ENCODE measurements at regions of chr19 and their contacts with region 1.

Region 1: GRCh38 chr19:53879140-53880081 is 2.6 kb upstream of the PRKCG start:
- DNase-seq: peak; percentile 85
- H3K4me3 Mint-ChIP-seq: no peak overlapping the region
- H3K27ac Mint-ChIP-seq: peak overlapping the region; percentile 14
- H3K4me1 Mint-ChIP-seq: peaks cover 47% of the 10 kb centered on the region
- H3K27me3 Mint-ChIP-seq: peaks cover 12% of the 10 kb centered on the region

Region 2: GRCh38 chr19:53853707-53854106 is 25.7 kb before region 1 on chr19:
- CTCF ChIA-PET with region 1: interaction called, 3 read pairs
- intact Hi-C with region 1: loop called (anchors 2 kb)
- DNase-seq: no peak
- H3K4me3 Mint-ChIP-seq: no peak overlapping the region
- H3K27ac Mint-ChIP-seq: no peak overlapping the region
- H3K4me1 Mint-ChIP-seq: no peaks in the 10 kb centered on the region
- H3K27me3 Mint-ChIP-seq: peaks cover 20% of the 10 kb centered on the region

Region 3: DNA sequence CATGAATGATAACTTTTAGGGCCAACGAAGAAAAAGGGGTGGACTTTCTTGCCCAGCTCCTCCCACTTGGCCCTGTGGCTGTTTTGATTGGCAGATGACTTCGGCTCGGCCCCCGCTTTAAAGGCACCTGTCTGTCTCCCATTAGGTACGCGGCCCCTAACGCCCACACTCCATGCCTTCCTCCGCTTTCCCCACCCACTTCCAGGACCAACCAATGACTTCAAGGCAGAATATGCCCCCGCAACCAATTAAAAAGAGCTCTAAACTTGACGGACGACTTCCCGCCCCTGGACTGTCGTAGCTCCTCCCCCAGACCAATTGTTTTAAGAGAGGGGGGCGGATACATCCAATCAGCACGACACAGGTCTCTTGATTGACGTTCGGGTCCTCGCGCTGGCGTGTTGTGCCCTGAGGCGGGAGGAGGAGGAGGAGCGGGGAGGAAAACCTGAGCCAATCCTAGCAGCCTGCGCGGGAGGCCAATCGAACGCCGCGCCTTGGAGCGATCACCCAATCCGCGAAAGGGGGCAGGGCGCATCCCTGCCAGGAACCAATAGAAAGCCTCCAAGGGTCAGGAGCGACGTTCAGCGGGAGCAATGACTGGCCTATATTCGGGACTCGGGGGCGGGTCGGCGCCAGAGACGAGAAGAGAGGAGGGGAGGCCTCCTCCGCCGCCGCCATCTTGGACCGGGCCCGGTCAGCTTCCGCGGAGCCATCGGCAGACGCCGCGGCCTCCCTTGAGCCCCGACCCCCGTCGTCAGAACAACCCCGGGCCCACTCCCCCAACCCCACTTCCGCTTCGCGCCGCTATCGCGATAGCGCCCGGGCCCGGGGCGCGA is 257.9 kb after region 1 on chr19 and contains the start of gene CNOT3:
- CTCF ChIA-PET with region 1: no interaction called
- intact Hi-C with region 1: no loop called
- DNase-seq: peak; percentile 100
- H3K4me3 Mint-ChIP-seq: peak within 1 kb of the TSS; percentile 83
- H3K27ac Mint-ChIP-seq: peak within 1 kb of the TSS; percentile 89
- H3K4me1 Mint-ChIP-seq: peaks cover 39% of the 10 kb centered on the region
- H3K27me3 Mint-ChIP-seq: no peaks in the 10 kb centered on the region
- total RNA-seq, gene CNOT3: 50.4 to 58.3 TPM

Measured in activated naive CD4-positive, alpha-beta T cell treated with anti-CD3 and anti-CD28 coated beads for 36 hours (primary cell).